ENCODE measurements at regions of chr3 and their contacts with region 1.

Region 1: DNA sequence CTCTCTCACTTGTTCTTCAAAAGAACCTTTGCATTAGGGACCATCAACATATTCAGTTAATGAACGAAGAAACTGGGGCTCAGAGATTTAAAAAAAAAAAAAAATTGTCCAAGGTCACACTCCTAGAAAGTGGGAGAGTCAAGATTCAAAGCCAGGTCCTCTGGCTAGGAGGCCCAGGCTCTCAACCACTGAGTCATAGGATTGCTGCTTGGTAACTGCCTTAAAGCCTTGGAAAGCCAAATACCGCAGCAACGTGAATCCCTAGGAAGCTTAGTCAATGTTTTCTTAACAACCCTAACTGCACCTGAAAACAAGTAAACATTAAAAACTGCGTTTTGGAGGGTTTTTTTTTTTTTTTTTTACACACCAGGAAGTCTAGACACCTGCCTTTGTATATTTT is 156.8 kb downstream of the WNT5A start:
- DNase-seq: no peak
- H3K4me3 ChIP-seq: no peak overlapping the region
- H3K27ac ChIP-seq: no peak overlapping the region
- H3K4me1 ChIP-seq: no peaks in the 10 kb centered on the region
- H3K27me3 ChIP-seq: no peaks in the 10 kb centered on the region
- CTCF ChIP-seq: no peak
- POLR2A ChIP-seq: no peak

Region 2: DNA sequence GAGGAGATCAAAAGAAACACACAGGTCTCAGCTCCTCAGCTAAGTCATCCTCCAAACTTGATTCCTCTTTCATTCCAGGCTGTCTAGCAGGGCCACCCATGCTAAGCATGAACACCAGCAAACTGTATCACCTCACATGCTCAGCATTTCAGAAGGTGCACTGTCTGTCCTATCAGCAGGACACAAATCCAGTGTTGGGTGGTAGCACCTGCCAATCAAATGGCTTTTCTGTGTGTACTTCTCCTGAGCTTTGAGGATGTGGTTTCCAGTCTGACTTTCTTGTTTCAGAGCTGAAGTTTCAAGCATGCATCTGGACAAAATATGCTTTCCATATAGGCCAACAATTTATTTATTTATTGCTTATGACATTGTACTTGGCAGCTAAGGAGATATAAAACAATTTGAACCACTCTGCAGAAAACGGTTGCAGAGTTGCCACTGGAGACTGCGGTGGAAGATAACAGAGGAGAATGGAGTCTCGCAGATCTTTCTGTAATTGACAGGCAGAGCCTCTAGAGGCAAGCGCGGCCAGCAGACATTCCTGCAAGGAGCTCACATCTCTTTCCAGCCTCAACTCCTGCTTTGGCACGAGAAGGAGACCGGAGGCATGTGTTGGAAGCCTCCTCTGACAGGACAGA is 323.9 kb after region 1 on chr3:
- CTCF ChIA-PET with region 1: no interaction called
- POLR2A ChIA-PET with region 1: no interaction called
- dilution Hi-C with region 1: no loop called
- intact Hi-C with region 1: no loop called
- DNase-seq: no peak
- H3K4me3 ChIP-seq: no peak overlapping the region
- H3K27ac ChIP-seq: no peak overlapping the region
- H3K4me1 ChIP-seq: no peaks in the 10 kb centered on the region
- H3K27me3 ChIP-seq: no peaks in the 10 kb centered on the region
- CTCF ChIP-seq: no peak
- POLR2A ChIP-seq: no peak

Region 3: GRCh38 chr3:55826731-55827496 is 496.6 kb after region 1 on chr3:
- CTCF ChIA-PET with region 1: no interaction called
- POLR2A ChIA-PET with region 1: no interaction called
- dilution Hi-C with region 1: no loop called
- intact Hi-C with region 1: loop called (anchors 10 kb)
- DNase-seq: peak; percentile 8
- H3K4me3 ChIP-seq: no peak overlapping the region
- H3K27ac ChIP-seq: no peak overlapping the region
- H3K4me1 ChIP-seq: no peaks in the 10 kb centered on the region
- H3K27me3 ChIP-seq: no peaks in the 10 kb centered on the region
- CTCF ChIP-seq: no peak
- POLR2A ChIP-seq: no peak

Measured in endothelial cell of umbilical vein (primary cell).